Heart right ventricle (tissue), 16 donors: ENCODE measurements at regions of chr5 and their contacts with region 1.

Region 1: DNA sequence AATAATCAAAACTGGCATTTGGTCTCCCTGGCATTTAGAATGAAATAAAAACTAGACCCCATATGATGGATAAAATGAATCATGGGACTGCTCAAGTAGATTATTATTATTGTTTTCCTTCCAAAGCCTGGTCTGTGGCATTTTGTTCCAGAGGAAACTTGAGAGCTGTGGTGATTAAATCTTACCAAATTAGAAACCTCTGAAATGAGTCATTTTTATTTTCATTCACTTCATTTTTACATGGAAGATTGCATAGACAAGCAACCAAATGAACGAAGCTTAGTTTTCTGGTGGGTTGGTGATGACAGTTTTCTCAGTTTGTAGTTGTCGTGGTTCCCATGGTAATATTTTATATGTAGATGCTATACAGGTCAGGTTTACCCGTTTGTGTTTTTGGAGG is 23.4 kb downstream of the PAM start:
- DNase-seq: no peak
- ATAC-seq: peak in 1 of 8 donors; percentile 43
- H3K4me3 ChIP-seq: no peak overlapping the region
- H3K27ac ChIP-seq: peak overlapping the region in 1 of 10 donors; percentile 13
- H3K4me1 ChIP-seq: peaks cover 0 to 62% (median 44%) of the 10 kb centered on the region in 9 donors
- H3K27me3 ChIP-seq: no peaks in the 10 kb centered on the region
- CTCF ChIP-seq: no peak

Region 2: GRCh38 chr5:102649731-102650130 is 128.7 kb before region 1 on chr5:
- intact Hi-C with region 1: no loop called
- DNase-seq: no peak
- ATAC-seq: no peak
- H3K4me3 ChIP-seq: no peak overlapping the region
- H3K27ac ChIP-seq: no peak overlapping the region
- H3K4me1 ChIP-seq: no peaks in the 10 kb centered on the region
- H3K27me3 ChIP-seq: no peaks in the 10 kb centered on the region
- CTCF ChIP-seq: no peak

Region 3: GRCh38 chr5:102865510-102866236 is 87.2 kb after region 1 on chr5:
- intact Hi-C with region 1: loop called in 3 of 10 experiments (anchors 2 to 5 kb)
- DNase-seq: peak; percentile 78 to 83
- ATAC-seq: peak; percentile 89 to 98 (median 94)
- H3K4me3 ChIP-seq: peak overlapping the region; percentile 56 to 83 (median 72)
- H3K27ac ChIP-seq: peak overlapping the region; percentile 78 to 95 (median 91)
- H3K4me1 ChIP-seq: peaks cover 0 to 62% (median 25%) of the 10 kb centered on the region in 9 donors
- H3K27me3 ChIP-seq: no peaks in the 10 kb centered on the region
- CTCF ChIP-seq: peak in 1 of 9 donors; percentile 10

Region 4: DNA sequence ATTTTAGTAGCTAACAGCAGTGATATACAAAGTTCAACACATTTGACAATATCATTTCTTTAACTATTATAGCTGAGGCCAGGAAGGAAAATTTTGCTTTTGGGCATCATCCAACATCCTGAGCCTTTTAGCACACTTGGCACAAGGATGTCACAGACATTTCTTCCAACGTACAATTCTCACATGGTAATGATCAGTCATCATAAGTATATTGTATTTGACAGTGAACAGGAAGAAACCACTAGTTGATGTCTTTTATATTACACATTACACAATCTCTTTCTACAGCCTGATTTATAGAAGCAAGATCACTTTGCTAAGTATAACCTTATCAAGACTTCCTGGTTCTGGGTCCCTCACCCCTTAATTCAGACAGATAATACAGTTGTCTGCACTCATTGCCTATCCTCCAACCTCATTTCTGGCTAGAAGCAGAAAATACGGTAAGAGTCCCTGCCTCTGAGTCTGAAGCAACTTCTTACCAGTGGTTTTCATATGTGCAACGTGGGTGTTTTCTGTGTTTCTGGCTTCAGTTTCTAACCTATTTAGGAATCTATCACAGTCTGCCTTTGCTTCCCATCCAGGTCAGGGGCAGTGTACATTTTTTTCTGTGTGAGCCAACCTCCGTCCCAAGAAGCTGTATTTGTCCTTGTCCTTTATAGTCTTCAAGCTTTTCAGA is 144.5 kb after region 1 on chr5:
- intact Hi-C with region 1: loop called in 1 of 10 experiments (anchors 5 kb)
- DNase-seq: no peak
- ATAC-seq: peak in 5 of 8 donors; percentile 11 to 55 (median 30)
- H3K4me3 ChIP-seq: no peak overlapping the region
- H3K27ac ChIP-seq: peak overlapping the region in 1 of 10 donors; percentile 2
- H3K4me1 ChIP-seq: peaks cover 2 to 40% (median 24%) of the 10 kb centered on the region in 9 donors
- H3K27me3 ChIP-seq: no peaks in the 10 kb centered on the region
- CTCF ChIP-seq: no peak

Region 5: DNA sequence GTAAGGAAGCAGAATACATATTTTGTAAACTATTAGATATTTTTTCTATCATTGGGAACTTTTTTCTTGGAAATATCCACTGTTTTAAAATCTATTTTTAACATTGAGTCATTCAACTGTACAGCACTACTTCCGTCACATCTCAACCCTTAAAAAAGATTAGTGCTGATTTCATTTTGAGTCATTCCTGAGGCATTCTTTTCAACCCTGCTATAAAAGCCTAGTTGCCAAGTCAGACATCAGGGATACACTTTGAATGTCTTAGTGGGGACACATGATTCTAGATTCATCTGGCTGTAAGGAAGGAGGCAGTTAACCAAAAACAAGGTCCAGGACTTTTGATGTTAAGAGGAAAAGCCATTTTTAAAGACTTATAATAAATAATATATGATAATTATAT is 180.6 kb after region 1 on chr5:
- intact Hi-C with region 1: loop called in 2 of 10 experiments (anchors 10 kb)
- DNase-seq: no peak
- ATAC-seq: peak; percentile 42 to 87 (median 75)
- H3K4me3 ChIP-seq: no peak overlapping the region
- H3K27ac ChIP-seq: peak overlapping the region in 8 of 10 donors; percentile 40 to 73 (median 60)
- H3K4me1 ChIP-seq: peaks cover 0 to 21% (median 17%) of the 10 kb centered on the region in 9 donors
- H3K27me3 ChIP-seq: no peaks in the 10 kb centered on the region
- CTCF ChIP-seq: no peak

Region 6: GRCh38 chr5:102971697-102972293 is 193.3 kb after region 1 on chr5:
- intact Hi-C with region 1: loop called in 7 of 10 experiments (anchors 5 to 10 kb)
- DNase-seq: no peak
- ATAC-seq: peak in 6 of 8 donors; percentile 42 to 74 (median 51)
- H3K4me3 ChIP-seq: no peak overlapping the region
- H3K27ac ChIP-seq: no peak overlapping the region
- H3K4me1 ChIP-seq: peaks cover 0 to 16% (median 10%) of the 10 kb centered on the region in 9 donors
- H3K27me3 ChIP-seq: no peaks in the 10 kb centered on the region
- CTCF ChIP-seq: peak in 7 of 9 donors; percentile 36 to 72 (median 50)

Region 7: GRCh38 chr5:103031607-103032006 is 253.1 kb after region 1 on chr5:
- intact Hi-C with region 1: loop called in 2 of 10 experiments (anchors 5 to 10 kb)
- DNase-seq: no peak
- ATAC-seq: no peak
- H3K4me3 ChIP-seq: no peak overlapping the region
- H3K27ac ChIP-seq: no peak overlapping the region
- H3K4me1 ChIP-seq: peaks cover 0 to 15% (median 0%) of the 10 kb centered on the region in 9 donors
- H3K27me3 ChIP-seq: no peaks in the 10 kb centered on the region
- CTCF ChIP-seq: peak in 6 of 9 donors; percentile 12 to 39 (median 22)

Region 8: GRCh38 chr5:103119765-103120606 is 341.5 kb after region 1 on chr5 and contains the starts of genes GIN1 and PPIP5K2:
- intact Hi-C with region 1: loop called in 1 of 10 experiments (anchors 10 kb)
- DNase-seq: peak; percentile 93 to 97
- ATAC-seq: peak; percentile 98 to 100 (median 99)
- H3K4me3 ChIP-seq: peak within 1 kb of the TSS; percentile 64 to 95 (median 78)
- H3K27ac ChIP-seq: peak within 1 kb of the TSS; percentile 88 to 97 (median 90)
- H3K4me1 ChIP-seq: peaks cover 0 to 42% (median 34%) of the 10 kb centered on the region in 9 donors
- H3K27me3 ChIP-seq: no peaks in the 10 kb centered on the region
- CTCF ChIP-seq: peak in 3 of 9 donors; percentile 4 to 17 (median 7)
- total RNA-seq, gene GIN1: 12.0 to 19.7 (median 13.7) TPM
- total RNA-seq, gene PPIP5K2: 30.8 to 72.9 (median 35.6) TPM